ENCODE measurements at regions of chr2 and their contacts with region 1.

Region 1: GRCh38 chr2:205721057-205721449 is 38.8 kb downstream of the NRP2 start:
- DNase-seq: no peak
- H3K4me3 ChIP-seq: peak overlapping the region in 2 of 4 experiments; percentile 14 to 20; a peak in 2 of 8 replicates
- H3K27ac ChIP-seq: peak overlapping the region; percentile 54; the same call in 1 of the 2 replicates
- H3K4me1 ChIP-seq: peaks cover 12 to 24% (median 21%) of the 10 kb centered on the region in 4 experiments
- H3K27me3 ChIP-seq: no peaks in the 10 kb centered on the region
- CTCF ChIP-seq: peak; percentile 6 to 60 (median 53)
- EP300 ChIP-seq: no peak
- POLR2A ChIP-seq: no peak
- RAD21 ChIP-seq: peak in 1 of 2 experiments; percentile 31; a peak in 2 of 4 replicates

Region 2: DNA sequence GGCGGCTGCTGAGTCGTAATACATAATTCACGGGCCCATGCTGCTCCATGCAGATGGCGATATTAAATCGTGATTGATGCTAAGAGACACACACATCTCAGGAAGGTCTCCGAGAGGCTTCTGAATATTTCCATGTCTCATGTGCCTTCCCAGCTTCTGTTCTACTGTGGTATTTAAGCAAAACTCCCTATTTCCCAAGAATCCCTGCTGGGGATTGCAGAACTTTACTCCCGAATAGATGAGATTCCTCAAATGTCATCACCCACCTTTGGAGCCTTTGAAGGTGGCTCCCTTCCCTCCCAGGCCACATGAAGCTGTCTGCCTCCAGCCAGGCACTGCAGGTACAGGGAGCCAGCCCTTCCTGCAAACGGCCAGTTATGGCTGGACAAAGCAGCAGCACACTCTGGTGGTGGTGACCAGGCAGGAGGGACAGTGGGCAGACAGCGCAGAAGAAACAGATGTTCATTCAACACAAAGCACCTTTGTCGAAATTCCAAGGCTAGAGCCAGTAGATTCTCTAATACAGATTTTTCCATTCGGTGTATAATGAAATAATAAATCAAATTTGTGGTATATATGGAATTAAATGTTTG is 24.6 kb before region 1 on chr2:
- CTCF ChIA-PET with region 1: interaction called, 31 read pairs
- POLR2A ChIA-PET with region 1: no interaction called
- DNase-seq: no peak
- H3K4me3 ChIP-seq: no peak overlapping the region
- H3K27ac ChIP-seq: no peak overlapping the region
- H3K4me1 ChIP-seq: peaks cover 5 to 18% (median 13%) of the 10 kb centered on the region in 4 experiments
- H3K27me3 ChIP-seq: no peaks in the 10 kb centered on the region
- CTCF ChIP-seq: peak; percentile 28 to 53 (median 39); a peak in 3 of 4 replicates
- EP300 ChIP-seq: no peak
- POLR2A ChIP-seq: no peak
- RAD21 ChIP-seq: peak; percentile 60 to 72

Region 3: GRCh38 chr2:205748639-205749477 is 27.8 kb after region 1 on chr2:
- CTCF ChIA-PET with region 1: interaction called, 38 read pairs
- POLR2A ChIA-PET with region 1: interaction called, 3 read pairs
- DNase-seq: peak in 1 of 2 experiments; percentile 44
- H3K4me3 ChIP-seq: 0 out of 8 replicates have a peak overlapping the region, but pooled peaks of 1 of the 4 experiments have one; percentile 0
- H3K27ac ChIP-seq: peak overlapping the region; percentile 39; the same call in 1 of the 2 replicates
- H3K4me1 ChIP-seq: peaks cover 6 to 17% (median 9%) of the 10 kb centered on the region in 4 experiments; a peak in 6 of 7 replicates
- H3K27me3 ChIP-seq: no peaks in the 10 kb centered on the region
- CTCF ChIP-seq: no peak
- EP300 ChIP-seq: no peak
- POLR2A ChIP-seq: 0 out of 3 replicates have a peak, but pooled peaks of 1 of the 2 experiments have one; percentile 31
- RAD21 ChIP-seq: no peak

Region 4: GRCh38 chr2:205763708-205764211 is 42.7 kb after region 1 on chr2:
- CTCF ChIA-PET with region 1: interaction called, 10 read pairs
- POLR2A ChIA-PET with region 1: no interaction called
- DNase-seq: peak; percentile 68 to 98
- H3K4me3 ChIP-seq: peak overlapping the region; percentile 21 to 51 (median 41); a peak in 6 of 8 replicates
- H3K27ac ChIP-seq: peak overlapping the region; percentile 96
- H3K4me1 ChIP-seq: peaks cover 6 to 19% (median 8%) of the 10 kb centered on the region in 4 experiments
- H3K27me3 ChIP-seq: peaks cover 0 to 5% (median 0%) of the 10 kb centered on the region in 4 experiments; a peak in 2 of 7 replicates
- CTCF ChIP-seq: peak; percentile 80 to 97 (median 91)
- EP300 ChIP-seq: peak in 1 of 2 experiments; percentile 94; a peak in 1 of 3 replicates
- POLR2A ChIP-seq: peak; percentile 24 to 46; a peak in 2 of 3 replicates
- RAD21 ChIP-seq: peak; percentile 55 to 70

Measured in H1 (cell line).